ENCODE measurements at regions of chr22 and their contacts with region 1.

Region 1: GRCh38 chr22:40487663-40488249 is 117.4 kb downstream of the SGSM3 start:
- DNase-seq: no peak

Region 2: DNA sequence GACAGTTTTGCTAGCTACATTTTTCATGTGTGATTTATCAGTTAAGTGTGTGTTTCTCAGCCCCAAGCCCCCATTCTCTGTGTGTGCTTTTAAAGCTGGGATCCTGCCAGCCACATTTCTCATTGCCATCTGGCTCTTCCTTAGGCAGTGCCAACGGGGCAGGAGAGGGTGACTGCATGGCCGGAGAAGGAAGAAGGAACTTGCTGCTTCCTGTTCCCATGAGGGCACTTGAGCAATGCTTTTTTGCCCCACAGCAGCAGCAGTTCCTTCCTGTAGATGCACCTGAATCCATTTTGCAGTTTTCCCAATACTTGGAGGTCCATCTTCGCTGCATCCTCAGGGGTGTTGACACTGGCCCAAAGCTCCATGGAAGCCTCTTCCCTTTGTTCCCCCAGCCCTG is 272.5 kb before region 1 on chr22:
- intact Hi-C with region 1: no loop called
- DNase-seq: peak in 1 of 10 donors; percentile 21

Region 3: GRCh38 chr22:40436505-40437451 is 51.0 kb before region 1 on chr22:
- intact Hi-C with region 1: loop called (anchors 5 kb)
- DNase-seq: peak in 1 of 10 donors; percentile 85

Measured in posterior cingulate gyrus (tissue), 11 donors.